ENCODE measurements at regions of chr1 and their contacts with region 1.

Region 1: DNA sequence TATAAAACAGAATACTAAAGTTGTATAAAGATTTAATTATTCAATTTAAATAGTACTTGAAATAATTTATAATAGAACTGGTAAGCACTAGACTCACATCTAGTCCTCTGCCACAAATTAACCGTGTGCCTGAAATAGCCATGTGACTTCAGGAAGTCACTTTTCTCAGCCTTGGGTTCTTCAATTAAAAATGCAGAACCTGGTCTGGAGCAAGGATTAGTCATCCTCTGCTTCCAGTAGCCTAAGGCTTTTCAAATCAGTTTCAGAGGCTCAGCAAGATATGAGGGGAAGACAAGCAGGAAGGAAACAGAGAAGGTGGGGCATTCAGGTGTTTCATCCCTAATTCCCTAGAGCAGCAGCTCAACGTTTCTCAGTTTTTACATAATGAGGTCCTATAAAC is 23.0 kb downstream of the DPH5 start:
- DNase-seq: no peak
- H3K4me3 Mint-ChIP-seq: no peak overlapping the region
- H3K27ac Mint-ChIP-seq: peak overlapping the region; percentile 59
- H3K4me1 Mint-ChIP-seq: peaks cover 52% of the 10 kb centered on the region
- H3K27me3 Mint-ChIP-seq: no peaks in the 10 kb centered on the region

Region 2: GRCh38 chr1:100832682-100833469 is 169.7 kb before region 1 on chr1:
- CTCF ChIA-PET with region 1: no interaction called
- intact Hi-C with region 1: no loop called
- DNase-seq: no peak
- H3K4me3 Mint-ChIP-seq: no peak overlapping the region
- H3K27ac Mint-ChIP-seq: no peak overlapping the region
- H3K4me1 Mint-ChIP-seq: no peaks in the 10 kb centered on the region
- H3K27me3 Mint-ChIP-seq: peaks cover 3% of the 10 kb centered on the region

Region 3: GRCh38 chr1:100895540-100896483 is 106.7 kb before region 1 on chr1 and contains the start of gene SLC30A7:
- CTCF ChIA-PET with region 1: no interaction called
- intact Hi-C with region 1: loop called (anchors 1 kb)
- DNase-seq: peak; percentile 98
- H3K4me3 Mint-ChIP-seq: peak within 1 kb of the TSS; percentile 100
- H3K27ac Mint-ChIP-seq: peak within 1 kb of the TSS; percentile 100
- H3K4me1 Mint-ChIP-seq: peaks cover 37% of the 10 kb centered on the region
- H3K27me3 Mint-ChIP-seq: no peaks in the 10 kb centered on the region
- total RNA-seq, gene SLC30A7: 32.4 to 32.6 TPM

Region 4: GRCh38 chr1:100941098-100941527 is 61.4 kb before region 1 on chr1:
- CTCF ChIA-PET with region 1: interaction called, 3 read pairs
- intact Hi-C with region 1: loop called (anchors 1 kb)
- DNase-seq: peak; percentile 58
- H3K4me3 Mint-ChIP-seq: peak overlapping the region; percentile 58
- H3K27ac Mint-ChIP-seq: peak overlapping the region; percentile 92
- H3K4me1 Mint-ChIP-seq: peaks cover 48% of the 10 kb centered on the region
- H3K27me3 Mint-ChIP-seq: peaks cover 2% of the 10 kb centered on the region

Region 5: GRCh38 chr1:101030881-101031280 is 28.3 kb after region 1 on chr1:
- CTCF ChIA-PET with region 1: no interaction called
- intact Hi-C with region 1: no loop called
- DNase-seq: no peak
- H3K4me3 Mint-ChIP-seq: no peak overlapping the region
- H3K27ac Mint-ChIP-seq: no peak overlapping the region
- H3K4me1 Mint-ChIP-seq: peaks cover 48% of the 10 kb centered on the region
- H3K27me3 Mint-ChIP-seq: no peaks in the 10 kb centered on the region

Region 6: DNA sequence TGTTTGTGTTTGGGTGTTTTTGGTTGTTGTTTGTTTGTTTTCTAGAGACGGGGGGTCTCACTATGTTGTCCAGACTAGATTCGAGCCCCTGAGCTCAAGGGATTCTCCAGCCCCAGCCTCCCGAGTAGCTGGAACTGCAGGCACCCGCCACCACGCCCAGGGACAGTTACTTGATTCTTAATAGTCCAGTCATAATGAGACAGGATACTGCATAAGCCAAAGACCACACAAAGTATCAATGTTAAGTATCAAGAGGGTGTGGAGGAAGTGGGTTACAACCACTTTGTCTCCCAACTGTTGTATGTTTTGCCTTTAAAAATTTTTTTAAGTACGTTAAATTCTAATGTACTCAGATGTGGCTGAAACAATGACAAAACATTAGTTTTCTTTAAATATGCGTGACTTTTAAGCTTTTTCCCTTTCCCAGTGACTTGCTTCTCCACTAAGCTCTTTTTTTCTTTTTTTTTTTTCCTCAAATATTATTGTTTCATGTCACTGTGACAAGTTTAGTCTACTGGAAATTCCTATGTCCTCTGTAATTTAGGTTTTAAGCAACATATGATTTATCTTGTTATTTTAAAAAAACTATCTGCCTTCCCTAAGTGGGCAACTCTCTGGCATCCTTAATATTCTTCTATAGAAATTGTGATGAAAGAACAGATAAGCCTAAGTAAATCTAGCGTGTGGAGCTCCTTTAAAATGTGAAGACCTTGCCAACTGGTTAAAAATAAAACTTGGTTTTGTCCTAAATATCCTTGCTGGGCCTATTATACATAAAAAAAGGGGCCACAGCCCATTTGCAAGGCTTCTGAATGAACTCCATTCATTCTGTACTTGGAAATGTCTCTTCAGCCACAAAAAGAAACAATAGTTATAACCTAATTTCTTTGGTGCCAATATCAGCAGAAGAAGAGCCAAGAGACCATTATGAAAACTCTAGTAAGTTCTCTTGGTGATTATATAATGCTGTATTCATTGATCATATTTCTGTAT is 79.2 kb after region 1 on chr1:
- CTCF ChIA-PET with region 1: no interaction called
- intact Hi-C with region 1: loop called (anchors 2 kb)
- DNase-seq: peak; percentile 62
- H3K4me3 Mint-ChIP-seq: peak overlapping the region; percentile 10
- H3K27ac Mint-ChIP-seq: peak overlapping the region; percentile 48
- H3K4me1 Mint-ChIP-seq: peaks cover 26% of the 10 kb centered on the region
- H3K27me3 Mint-ChIP-seq: no peaks in the 10 kb centered on the region

Region 7: DNA sequence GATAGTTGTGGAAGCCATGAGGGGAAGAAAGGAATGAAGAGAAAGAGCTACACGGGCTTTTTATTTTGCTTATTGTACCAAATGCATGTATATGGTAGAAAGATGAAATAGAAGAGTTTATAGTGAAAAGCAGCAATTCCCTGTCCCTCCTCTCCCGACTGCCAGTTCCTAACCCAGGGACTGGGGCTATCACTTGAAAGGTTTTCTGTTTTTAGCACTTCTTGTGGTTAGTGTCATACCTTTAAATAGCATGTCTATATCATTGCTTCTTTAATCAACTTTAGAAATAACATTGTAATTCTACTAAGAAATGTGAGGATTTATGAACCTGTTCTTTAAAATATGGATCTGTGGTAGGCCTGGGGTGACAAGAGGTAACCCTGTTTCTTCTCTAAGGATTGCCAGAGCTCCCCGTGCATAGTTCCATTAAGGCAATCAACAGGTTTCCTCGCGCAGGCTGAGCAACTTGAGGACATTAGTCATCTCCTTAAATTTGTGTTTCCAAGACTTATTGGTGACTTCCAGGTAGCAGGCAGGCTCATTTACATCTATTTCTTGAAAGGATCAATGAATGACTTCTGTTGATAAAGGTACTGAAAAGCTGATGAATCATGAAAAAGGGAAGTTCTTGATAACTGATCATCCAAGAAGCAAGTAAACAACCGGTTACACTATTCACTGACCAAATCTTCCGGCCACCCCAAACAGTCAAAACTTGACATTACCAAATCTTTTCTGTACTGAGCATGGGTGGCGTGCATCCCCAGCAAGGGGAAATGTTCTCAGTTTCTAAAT is 196.5 kb after region 1 on chr1:
- CTCF ChIA-PET with region 1: no interaction called
- intact Hi-C with region 1: loop called (anchors 2 kb)
- DNase-seq: peak; percentile 82
- H3K4me3 Mint-ChIP-seq: no peak overlapping the region
- H3K27ac Mint-ChIP-seq: peak overlapping the region; percentile 79
- H3K4me1 Mint-ChIP-seq: peaks cover 28% of the 10 kb centered on the region
- H3K27me3 Mint-ChIP-seq: no peaks in the 10 kb centered on the region

Measured in activated naive CD4-positive, alpha-beta T cell treated with anti-CD3 and anti-CD28 coated beads for 36 hours (primary cell).